Activated CD8-positive, alpha-beta T cell treated with anti-CD3 and anti-CD28 coated beads, Interleukin-2, amount 10 ng/mL, durations not matched to agents 7 days and 5 days (primary cell): ENCODE measurements at regions of chr15 and their contacts with region 1.

Region 1: GRCh38 chr15:57706405-57707209 is at the start of gene POLR2M:
- DNase-seq: peak; percentile 95
- ATAC-seq: peak; percentile 90
- H3K4me3 Mint-ChIP-seq: peak within 1 kb of the TSS; percentile 90
- H3K27ac Mint-ChIP-seq: peak within 1 kb of the TSS; percentile 87
- H3K4me1 Mint-ChIP-seq: peaks cover 58% of the 10 kb centered on the region
- H3K27me3 Mint-ChIP-seq: peaks cover 9% of the 10 kb centered on the region
- total RNA-seq, gene POLR2M: 61.8 to 74.8 TPM

Region 2: DNA sequence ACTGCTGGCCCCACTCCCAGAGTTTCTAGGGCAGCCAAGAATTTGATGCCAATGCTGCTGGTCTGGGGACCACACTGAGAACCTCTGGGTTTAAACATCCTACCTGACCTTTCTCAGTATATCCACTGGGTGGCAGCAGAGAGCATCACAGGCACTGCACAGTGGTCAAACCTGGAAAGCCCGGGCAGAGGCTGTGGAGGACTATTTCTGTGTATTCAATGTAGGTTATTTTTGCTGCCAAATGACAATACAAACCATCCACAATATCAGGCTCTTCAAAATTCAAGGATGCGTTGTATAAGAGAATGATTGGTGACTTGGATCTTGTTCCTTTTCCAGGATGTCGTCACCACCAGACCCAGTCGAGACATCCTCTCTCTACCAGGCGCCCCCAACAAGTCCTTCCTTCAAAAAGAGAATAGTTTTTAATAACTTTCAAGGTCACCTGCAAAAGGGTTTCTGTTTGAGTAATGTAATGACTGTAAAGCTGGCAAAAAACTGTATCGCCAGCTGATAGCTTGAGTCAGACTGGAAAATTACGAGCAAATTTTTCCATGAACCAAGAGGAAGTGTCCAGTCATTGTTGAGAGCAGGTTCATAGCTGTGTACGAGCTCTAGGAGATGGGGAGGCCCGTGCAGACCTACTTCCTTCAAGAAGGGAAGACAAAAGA is 145.4 kb before region 1 on chr15:
- CTCF ChIA-PET with region 1: interaction called, 13 read pairs
- POLR2A ChIA-PET with region 1: no interaction called
- DNase-seq: peak; percentile 74
- ATAC-seq: peak; percentile 84
- H3K4me3 Mint-ChIP-seq: no peak overlapping the region
- H3K27ac Mint-ChIP-seq: no peak overlapping the region
- H3K4me1 Mint-ChIP-seq: peaks cover 34% of the 10 kb centered on the region
- H3K27me3 Mint-ChIP-seq: peaks cover 13% of the 10 kb centered on the region

Region 3: DNA sequence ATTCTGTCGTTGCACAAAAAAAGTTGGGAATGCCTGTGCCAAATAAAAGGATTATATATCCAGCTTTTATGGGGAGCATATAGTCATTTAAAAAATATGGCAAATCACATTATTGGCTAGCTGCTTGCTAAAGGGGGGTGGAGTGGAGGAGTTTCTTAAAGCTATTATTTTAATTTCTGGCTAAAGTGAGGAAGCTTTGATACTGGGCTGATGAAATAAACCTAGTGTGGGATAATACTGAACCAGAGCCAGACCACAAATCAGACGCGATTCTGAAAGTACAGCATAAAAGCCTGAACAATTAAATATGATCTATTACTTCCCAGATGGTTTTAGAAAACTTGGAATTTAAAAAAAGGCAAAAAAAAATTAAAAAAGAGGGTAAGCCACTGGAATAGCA is 14.3 kb after region 1 on chr15:
- CTCF ChIA-PET with region 1: interaction called, 5 read pairs
- POLR2A ChIA-PET with region 1: interaction called, 14 read pairs
- DNase-seq: no peak
- ATAC-seq: no peak
- H3K4me3 Mint-ChIP-seq: no peak overlapping the region
- H3K27ac Mint-ChIP-seq: no peak overlapping the region
- H3K4me1 Mint-ChIP-seq: no peaks in the 10 kb centered on the region
- H3K27me3 Mint-ChIP-seq: no peaks in the 10 kb centered on the region